Calu3 (cell line): ENCODE measurements at regions of chr16 and their contacts with region 1.

Region 1: DNA sequence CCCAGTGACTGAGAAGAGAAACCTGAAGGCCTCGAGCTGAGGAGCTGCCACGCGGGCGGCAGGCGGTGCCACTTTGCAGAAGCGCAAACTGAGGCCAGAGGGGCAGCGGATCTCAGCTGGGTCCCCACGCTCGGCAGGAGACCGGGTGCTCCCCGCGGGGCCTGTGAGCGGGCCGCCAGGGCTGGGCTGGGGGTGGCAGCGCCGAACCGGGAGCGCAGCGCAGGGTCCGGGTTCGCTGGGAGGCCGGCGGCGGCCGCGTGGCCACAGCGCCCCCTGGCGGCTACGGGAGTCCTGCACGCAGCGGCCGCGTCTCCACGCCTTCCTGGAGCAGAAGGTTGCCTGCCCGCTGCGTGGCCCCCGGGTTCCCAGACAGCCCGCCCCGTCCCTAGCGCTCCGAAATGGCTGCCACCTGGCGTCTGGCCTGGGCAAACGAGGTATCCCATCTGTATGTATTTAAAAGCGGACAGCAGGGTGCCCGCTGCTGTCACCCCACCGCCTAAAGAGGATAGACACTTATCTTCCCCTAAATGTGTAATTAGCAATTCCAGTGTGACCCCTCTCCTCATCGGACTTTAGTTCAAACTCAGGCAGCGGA is 96.1 kb upstream of the CDH5 start:
- DNase-seq: peak; percentile 90
- H3K4me3 Mint-ChIP-seq: peak overlapping the region; percentile 11
- H3K27ac Mint-ChIP-seq: no peak overlapping the region
- H3K4me1 Mint-ChIP-seq: peaks cover 24% of the 10 kb centered on the region
- H3K27me3 Mint-ChIP-seq: peaks cover 68% of the 10 kb centered on the region
- CTCF ChIP-seq: peak; percentile 99

Region 2: DNA sequence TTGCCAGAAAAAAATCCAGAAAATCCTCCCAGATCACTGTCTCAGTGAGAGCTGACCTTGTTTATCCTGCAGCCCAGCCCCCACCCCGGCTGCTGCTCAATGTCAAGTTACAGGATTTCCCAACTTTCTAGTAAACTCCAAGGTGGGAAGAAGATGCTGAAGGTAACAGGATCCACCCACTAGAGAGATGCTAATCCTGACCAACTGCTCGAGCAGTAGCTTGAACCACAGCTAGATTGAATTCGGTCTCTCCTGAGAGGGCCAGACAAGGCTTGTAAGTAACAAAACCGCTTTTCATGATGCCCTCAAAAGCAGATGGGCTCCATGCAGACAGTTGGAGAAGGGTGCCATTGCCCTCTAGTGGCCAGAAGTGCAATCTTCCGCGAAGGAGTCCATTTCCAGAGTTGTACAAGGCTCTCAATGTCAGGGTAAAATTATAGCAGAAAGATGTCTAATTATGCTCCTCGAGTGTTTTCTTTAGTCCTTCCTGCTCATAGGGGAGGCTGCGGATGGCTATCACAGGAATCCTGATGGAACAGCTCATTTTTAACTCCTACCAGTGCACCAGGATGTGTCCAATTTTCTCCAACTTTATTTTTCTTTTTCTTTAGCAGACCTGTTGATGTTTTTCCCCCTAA is 1152.5 kb before region 1 on chr16:
- CTCF ChIA-PET with region 1: no interaction called
- intact Hi-C with region 1: loop called (anchors 10 kb)
- DNase-seq: peak; percentile 54
- H3K4me3 Mint-ChIP-seq: no peak overlapping the region
- H3K27ac Mint-ChIP-seq: no peak overlapping the region
- H3K4me1 Mint-ChIP-seq: no peaks in the 10 kb centered on the region
- H3K27me3 Mint-ChIP-seq: no peaks in the 10 kb centered on the region
- CTCF ChIP-seq: peak; percentile 85

Region 3: DNA sequence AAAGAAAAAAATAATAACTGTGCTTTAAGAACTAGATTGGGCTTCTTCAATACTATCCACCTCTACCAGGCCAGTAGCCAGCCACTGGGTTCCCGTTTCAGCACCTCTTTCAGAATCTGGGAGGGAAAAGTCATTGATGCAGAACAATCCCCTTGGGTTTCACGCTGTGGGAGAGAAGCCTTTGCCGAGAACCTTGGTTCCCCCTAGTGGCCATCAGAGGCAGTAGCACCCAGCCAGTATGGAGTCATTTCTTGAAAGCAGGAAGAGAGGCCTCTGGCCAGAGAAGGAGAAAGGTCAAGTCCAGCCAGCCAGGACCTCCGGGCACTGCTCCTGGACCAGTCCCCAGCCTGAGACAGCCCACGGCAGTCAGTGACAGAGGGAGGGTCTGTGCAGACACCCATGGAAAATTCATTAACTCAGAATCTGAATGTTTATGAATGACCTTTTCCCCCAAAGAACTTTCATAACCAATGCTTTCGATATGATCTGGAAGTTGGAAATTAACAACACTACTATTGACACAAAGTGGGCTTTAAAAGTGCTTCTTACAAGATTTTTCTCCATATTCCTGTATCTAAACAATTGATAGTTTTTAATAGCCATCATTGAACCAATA is 44.9 kb after region 1 on chr16:
- CTCF ChIA-PET with region 1: interaction called, 9 read pairs
- intact Hi-C with region 1: loop called (anchors 1 kb)
- DNase-seq: peak; percentile 80
- H3K4me3 Mint-ChIP-seq: no peak overlapping the region
- H3K27ac Mint-ChIP-seq: no peak overlapping the region
- H3K4me1 Mint-ChIP-seq: no peaks in the 10 kb centered on the region
- H3K27me3 Mint-ChIP-seq: peaks cover 64% of the 10 kb centered on the region
- CTCF ChIP-seq: peak; percentile 96

Region 4: DNA sequence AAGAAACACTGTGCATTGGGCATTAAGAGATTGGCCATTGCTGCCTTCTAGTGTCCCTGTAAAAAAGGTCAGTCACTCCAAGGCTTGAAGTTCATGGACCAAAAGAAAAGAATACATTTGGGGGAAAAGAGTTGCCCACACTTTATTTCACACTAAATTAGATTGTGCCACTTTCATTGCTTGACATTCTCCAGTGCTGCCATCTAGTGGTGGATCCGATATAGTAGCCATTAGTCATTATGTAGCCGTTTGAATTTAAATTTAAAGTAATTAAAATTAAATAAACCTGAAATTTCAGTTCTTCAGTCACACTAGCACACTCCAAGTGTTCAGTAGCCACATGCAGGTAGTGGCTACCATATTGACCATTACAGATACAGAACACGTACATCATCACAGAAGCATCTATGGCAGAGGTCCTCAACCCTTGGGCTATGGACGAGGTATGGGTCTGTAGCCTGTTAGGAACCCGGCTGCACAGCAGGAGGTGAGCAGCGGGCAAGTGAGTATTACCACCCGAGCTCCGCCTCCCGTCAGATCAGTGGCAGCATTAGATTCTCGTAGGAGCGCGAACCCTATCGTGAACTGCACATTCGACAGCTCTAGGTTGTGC is 74.2 kb after region 1 on chr16:
- CTCF ChIA-PET with region 1: interaction called, 5 read pairs
- intact Hi-C with region 1: loop called (anchors 1 kb)
- DNase-seq: peak; percentile 68
- H3K4me3 Mint-ChIP-seq: no peak overlapping the region
- H3K27ac Mint-ChIP-seq: no peak overlapping the region
- H3K4me1 Mint-ChIP-seq: no peaks in the 10 kb centered on the region
- H3K27me3 Mint-ChIP-seq: peaks cover 92% of the 10 kb centered on the region
- CTCF ChIP-seq: peak; percentile 64